ENCODE measurements at regions of chr5 and their contacts with region 1.

Region 1: GRCh38 chr5:149268928-149269557 is 2.6 kb upstream of the AFAP1L1 start:
- DNase-seq: no peak
- H3K4me3 ChIP-seq: no peak overlapping the region
- H3K27ac ChIP-seq: no peak overlapping the region
- H3K4me1 ChIP-seq: peaks cover 7 to 8% (median 7%) of the 10 kb centered on the region in 4 experiments; a peak in 5 of 7 replicates
- H3K27me3 ChIP-seq: peaks cover 8 to 36% (median 24%) of the 10 kb centered on the region in 4 experiments
- CTCF ChIP-seq: peak in 2 of 3 experiments; percentile 60 to 69; a peak in 3 of 4 replicates
- EP300 ChIP-seq: no peak
- POLR2A ChIP-seq: no peak
- RAD21 ChIP-seq: peak; percentile 77 to 80

Region 2: GRCh38 chr5:149128023-149128875 is 140.8 kb before region 1 on chr5:
- CTCF ChIA-PET with region 1: interaction called, 62 read pairs
- POLR2A ChIA-PET with region 1: no interaction called
- DNase-seq: peak in 1 of 2 experiments; percentile 66
- H3K4me3 ChIP-seq: no peak overlapping the region
- H3K27ac ChIP-seq: no peak overlapping the region
- H3K4me1 ChIP-seq: peaks cover 0 to 9% (median 0%) of the 10 kb centered on the region in 4 experiments; a peak in 3 of 7 replicates
- H3K27me3 ChIP-seq: no peaks in the 10 kb centered on the region
- CTCF ChIP-seq: peak; percentile 76 to 84 (median 84)
- EP300 ChIP-seq: no peak
- POLR2A ChIP-seq: no peak
- RAD21 ChIP-seq: peak; percentile 56 to 64

Region 3: GRCh38 chr5:149141224-149141956 is 127.7 kb before region 1 on chr5 and contains the start of gene ABLIM3:
- CTCF ChIA-PET with region 1: interaction called, 82 read pairs
- POLR2A ChIA-PET with region 1: interaction called, 3 read pairs
- DNase-seq: peak; percentile 29 to 95
- H3K4me3 ChIP-seq: peak within 1 kb of the TSS; percentile 24 to 75 (median 51)
- H3K27ac ChIP-seq: no peak within 1 kb of the TSS
- H3K4me1 ChIP-seq: peaks cover 0 to 3% (median 0%) of the 10 kb centered on the region in 4 experiments; a peak in 1 of 7 replicates
- H3K27me3 ChIP-seq: peaks cover 0 to 21% (median 15%) of the 10 kb centered on the region in 4 experiments; a peak in 6 of 7 replicates
- CTCF ChIP-seq: peak; percentile 90 to 94 (median 93)
- EP300 ChIP-seq: no peak
- POLR2A ChIP-seq: no peak
- RAD21 ChIP-seq: peak; percentile 59 to 68
- total RNA-seq, gene ABLIM3: 0.56 and 0.69 TPM in 2 replicates

Region 4: GRCh38 chr5:149222914-149223848 is 45.9 kb before region 1 on chr5:
- CTCF ChIA-PET with region 1: interaction called, 12 read pairs
- POLR2A ChIA-PET with region 1: no interaction called
- DNase-seq: no peak
- H3K4me3 ChIP-seq: no peak overlapping the region
- H3K27ac ChIP-seq: no peak overlapping the region
- H3K4me1 ChIP-seq: no peaks in the 10 kb centered on the region
- H3K27me3 ChIP-seq: no peaks in the 10 kb centered on the region
- CTCF ChIP-seq: no peak
- EP300 ChIP-seq: no peak
- POLR2A ChIP-seq: no peak
- RAD21 ChIP-seq: no peak

Region 5: GRCh38 chr5:149254506-149254905 is 14.5 kb before region 1 on chr5:
- CTCF ChIA-PET with region 1: interaction called, 88 read pairs
- POLR2A ChIA-PET with region 1: no interaction called
- DNase-seq: peak in 1 of 2 experiments; percentile 52
- H3K4me3 ChIP-seq: no peak overlapping the region
- H3K27ac ChIP-seq: no peak overlapping the region
- H3K4me1 ChIP-seq: no peaks in the 10 kb centered on the region; a peak in 1 of 7 replicates
- H3K27me3 ChIP-seq: 0 out of 7 replicates have a peak, but pooled peaks cover 0 to 2% (median 0%) of the 10 kb centered on the region in 4 experiments
- CTCF ChIP-seq: no peak
- EP300 ChIP-seq: no peak
- POLR2A ChIP-seq: no peak
- RAD21 ChIP-seq: no peak

Region 6: GRCh38 chr5:149298842-149299404 is 29.9 kb after region 1 on chr5:
- CTCF ChIA-PET with region 1: interaction called, 11 read pairs
- POLR2A ChIA-PET with region 1: no interaction called
- DNase-seq: no peak
- H3K4me3 ChIP-seq: no peak overlapping the region
- H3K27ac ChIP-seq: no peak overlapping the region
- H3K4me1 ChIP-seq: peaks cover 0 to 6% (median 2%) of the 10 kb centered on the region in 4 experiments; a peak in 3 of 7 replicates
- H3K27me3 ChIP-seq: no peaks in the 10 kb centered on the region
- CTCF ChIP-seq: no peak
- EP300 ChIP-seq: no peak
- POLR2A ChIP-seq: no peak
- RAD21 ChIP-seq: no peak

Region 7: GRCh38 chr5:149320791-149321330 is 51.8 kb after region 1 on chr5:
- CTCF ChIA-PET with region 1: no interaction called
- POLR2A ChIA-PET with region 1: no interaction called
- DNase-seq: no peak
- H3K4me3 ChIP-seq: no peak overlapping the region
- H3K27ac ChIP-seq: no peak overlapping the region
- H3K4me1 ChIP-seq: peaks cover 0 to 6% (median 1%) of the 10 kb centered on the region in 4 experiments; a peak in 4 of 7 replicates
- H3K27me3 ChIP-seq: no peaks in the 10 kb centered on the region
- CTCF ChIP-seq: no peak
- EP300 ChIP-seq: no peak
- POLR2A ChIP-seq: no peak
- RAD21 ChIP-seq: no peak

Region 8: GRCh38 chr5:149352169-149352568 is 83.1 kb after region 1 on chr5:
- CTCF ChIA-PET with region 1: no interaction called
- POLR2A ChIA-PET with region 1: no interaction called
- DNase-seq: no peak
- H3K4me3 ChIP-seq: no peak overlapping the region
- H3K27ac ChIP-seq: no peak overlapping the region
- H3K4me1 ChIP-seq: no peaks in the 10 kb centered on the region; a peak in 1 of 7 replicates
- H3K27me3 ChIP-seq: no peaks in the 10 kb centered on the region; a peak in 1 of 7 replicates
- CTCF ChIP-seq: no peak
- EP300 ChIP-seq: no peak
- POLR2A ChIP-seq: no peak
- RAD21 ChIP-seq: no peak

Region 9: DNA sequence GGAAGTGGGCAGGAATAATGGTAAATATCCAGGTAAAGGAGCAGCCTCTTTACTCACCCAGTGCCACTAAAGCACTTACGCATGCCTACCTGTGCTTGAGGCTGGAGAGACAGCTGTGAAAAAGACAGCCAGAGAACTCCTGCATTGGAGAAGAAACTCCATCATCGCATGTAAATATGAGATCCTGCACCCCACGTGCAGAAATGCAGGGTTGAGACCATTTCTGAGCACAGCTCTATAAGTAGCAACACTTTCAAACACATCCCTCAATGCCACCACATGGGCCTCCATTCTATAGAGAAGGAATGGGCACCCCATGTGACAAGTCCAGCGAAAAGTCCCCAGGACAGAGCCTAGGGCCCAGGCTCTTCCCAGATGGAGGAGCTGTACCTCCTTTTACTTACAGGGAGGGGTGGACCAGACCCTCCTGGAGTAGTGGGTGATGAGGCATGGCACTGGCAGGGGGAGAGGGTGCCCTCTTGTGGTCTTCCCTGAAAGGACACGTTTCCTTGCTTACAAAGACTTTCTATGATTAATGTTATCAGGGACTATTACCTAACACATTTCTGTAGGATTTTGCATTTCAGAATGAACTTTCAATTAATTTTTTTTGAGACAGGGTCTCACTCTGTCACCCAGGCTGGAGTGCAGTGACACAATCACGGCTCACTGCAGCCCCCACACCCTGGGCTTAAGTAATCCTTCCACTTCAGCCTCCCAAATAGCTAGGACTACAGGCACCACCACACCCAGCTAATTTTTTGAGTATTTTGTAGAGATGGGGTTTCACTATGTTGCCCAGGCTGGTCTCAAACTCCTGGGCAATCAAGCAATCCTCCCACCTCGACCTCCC is 165.3 kb after region 1 on chr5:
- CTCF ChIA-PET with region 1: no interaction called
- POLR2A ChIA-PET with region 1: no interaction called
- DNase-seq: peak; percentile 62 to 87
- H3K4me3 ChIP-seq: no peak overlapping the region
- H3K27ac ChIP-seq: no peak overlapping the region
- H3K4me1 ChIP-seq: peaks cover 0 to 5% (median 2%) of the 10 kb centered on the region in 4 experiments; a peak in 2 of 7 replicates
- H3K27me3 ChIP-seq: no peaks in the 10 kb centered on the region
- CTCF ChIP-seq: peak; percentile 80 to 90 (median 88)
- EP300 ChIP-seq: no peak
- POLR2A ChIP-seq: no peak
- RAD21 ChIP-seq: peak; percentile 82 to 88

Measured in H1 (cell line).